ENCODE measurements at regions of chr1 and their contacts with region 1.

Region 1: GRCh38 chr1:234978397-234979295 is 150.0 kb downstream of the TOMM20 start:
- DNase-seq: peak; percentile 91 to 96 (median 93)
- H3K4me3 ChIP-seq: peak overlapping the region in 1 of 3 experiments; percentile 67
- H3K4me3 Mint-ChIP-seq: peak overlapping the region; percentile 86 to 96
- H3K27ac ChIP-seq: peak overlapping the region; percentile 99 to 100
- H3K27ac Mint-ChIP-seq: peak overlapping the region; percentile 100
- H3K4me1 ChIP-seq: peaks cover 100% of the 10 kb centered on the region in 2 donors
- H3K4me1 Mint-ChIP-seq: peaks cover 91% of the 10 kb centered on the region
- H3K27me3 ChIP-seq: no peaks in the 10 kb centered on the region
- H3K27me3 Mint-ChIP-seq: no peaks in the 10 kb centered on the region
- CTCF ChIP-seq: peak; percentile 28

Region 2: DNA sequence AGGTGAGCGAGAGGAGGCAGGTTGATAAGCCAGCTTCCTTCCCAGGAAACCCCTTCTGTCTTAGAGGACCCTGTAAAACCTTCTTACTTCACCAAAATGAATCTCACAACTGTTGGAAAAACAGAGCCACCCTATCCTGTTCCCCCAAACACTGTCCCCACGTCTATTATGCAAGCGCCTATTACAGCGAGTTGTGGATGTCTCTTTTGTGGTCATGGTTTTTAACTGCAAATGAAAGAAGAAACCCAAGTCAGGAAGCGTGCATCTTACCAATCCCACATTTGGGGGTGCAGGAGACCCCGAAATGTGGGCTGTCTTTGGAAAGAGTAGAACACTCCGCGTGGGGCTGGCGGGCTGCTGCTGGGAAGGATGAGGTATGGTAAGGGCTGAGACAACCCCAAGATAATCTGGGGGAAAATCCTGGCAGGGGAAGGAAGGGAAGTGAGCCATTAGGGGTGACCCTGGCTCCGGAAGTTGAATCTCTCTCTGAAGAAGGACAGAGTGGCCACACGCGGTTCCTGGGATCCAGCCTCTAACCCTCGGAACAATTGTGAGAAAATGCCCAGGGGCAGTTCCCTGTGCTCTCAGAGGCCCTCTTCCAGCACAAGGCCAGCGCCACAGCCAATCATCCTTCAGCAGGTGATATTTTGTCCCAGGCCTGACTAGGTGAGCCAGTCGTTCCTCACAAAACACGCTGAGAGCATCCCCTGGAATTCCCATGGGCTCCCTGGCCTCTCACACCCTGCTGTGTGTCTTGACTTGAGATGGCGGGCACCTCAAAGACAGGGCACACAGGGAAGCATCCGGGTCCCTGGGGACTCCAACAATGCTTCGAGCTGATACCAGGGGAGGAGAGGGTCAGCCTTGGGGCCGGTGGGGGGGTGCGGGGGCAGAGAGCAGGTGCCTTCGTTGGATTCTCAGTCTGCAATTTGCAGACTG is 200.2 kb before region 1 on chr1:
- intact Hi-C with region 1: loop called in 1 of 2 experiments (anchors 5 kb)
- DNase-seq: peak; percentile 71 to 88 (median 79)
- H3K4me3 ChIP-seq: peak overlapping the region; percentile 9 to 63 (median 10)
- H3K4me3 Mint-ChIP-seq: no peak overlapping the region
- H3K27ac ChIP-seq: peak overlapping the region; percentile 85 to 99
- H3K27ac Mint-ChIP-seq: no peak overlapping the region
- H3K4me1 ChIP-seq: peaks cover 62 to 63% of the 10 kb centered on the region in 2 donors
- H3K4me1 Mint-ChIP-seq: no peaks in the 10 kb centered on the region
- H3K27me3 ChIP-seq: no peaks in the 10 kb centered on the region
- H3K27me3 Mint-ChIP-seq: no peaks in the 10 kb centered on the region
- CTCF ChIP-seq: no peak

Region 3: GRCh38 chr1:234842726-234843641 is 135.7 kb before region 1 on chr1:
- intact Hi-C with region 1: loop called (anchors 2 to 5 kb)
- DNase-seq: peak in 2 of 3 donors; percentile 44 to 79
- H3K4me3 ChIP-seq: peak overlapping the region in 1 of 3 experiments; percentile 41
- H3K4me3 Mint-ChIP-seq: peak overlapping the region; percentile 64 to 65
- H3K27ac ChIP-seq: peak overlapping the region; percentile 98 to 100
- H3K27ac Mint-ChIP-seq: peak overlapping the region; percentile 97 to 99 (median 98)
- H3K4me1 ChIP-seq: peaks cover 78 to 91% of the 10 kb centered on the region in 2 donors
- H3K4me1 Mint-ChIP-seq: peaks cover 95% of the 10 kb centered on the region
- H3K27me3 ChIP-seq: no peaks in the 10 kb centered on the region
- H3K27me3 Mint-ChIP-seq: no peaks in the 10 kb centered on the region
- CTCF ChIP-seq: no peak

Region 4: DNA sequence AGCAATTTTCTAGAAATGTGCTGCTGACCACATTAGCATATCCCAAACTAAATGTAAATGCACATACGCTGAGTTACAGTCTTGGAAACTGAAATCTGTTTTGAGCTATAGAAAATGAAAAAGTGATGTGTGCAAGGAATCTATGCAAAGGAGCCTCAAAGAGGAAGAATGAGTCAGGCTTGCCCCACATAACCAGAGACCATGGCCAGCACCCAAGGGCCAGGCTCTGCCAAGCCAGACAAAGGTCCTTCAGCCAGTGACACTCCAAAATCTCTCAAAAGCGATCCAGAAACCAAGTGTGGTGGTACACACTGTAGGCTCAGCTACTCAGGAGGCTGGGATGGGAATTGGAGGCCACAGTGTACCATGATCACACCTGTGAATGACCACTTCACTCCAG is 45.2 kb before region 1 on chr1:
- intact Hi-C with region 1: loop called (anchors 1 to 10 kb)
- DNase-seq: peak; percentile 90 to 94 (median 92)
- H3K4me3 ChIP-seq: no peak overlapping the region
- H3K4me3 Mint-ChIP-seq: peak overlapping the region in 1 of 2 donors; percentile 55
- H3K27ac ChIP-seq: peak overlapping the region; percentile 95 to 98
- H3K27ac Mint-ChIP-seq: peak overlapping the region; percentile 97 to 99 (median 99)
- H3K4me1 ChIP-seq: peaks cover 57 to 85% of the 10 kb centered on the region in 2 donors
- H3K4me1 Mint-ChIP-seq: peaks cover 65% of the 10 kb centered on the region
- H3K27me3 ChIP-seq: no peaks in the 10 kb centered on the region
- H3K27me3 Mint-ChIP-seq: no peaks in the 10 kb centered on the region
- CTCF ChIP-seq: no peak

Region 5: GRCh38 chr1:234963180-234963903 is 15.3 kb before region 1 on chr1:
- intact Hi-C with region 1: loop called in 1 of 2 experiments (anchors 1 kb)
- DNase-seq: peak; percentile 98 to 100 (median 99)
- H3K4me3 ChIP-seq: peak overlapping the region in 1 of 3 experiments; percentile 19
- H3K4me3 Mint-ChIP-seq: peak overlapping the region; percentile 70 to 85
- H3K27ac ChIP-seq: peak overlapping the region; percentile 89 to 100
- H3K27ac Mint-ChIP-seq: peak overlapping the region; percentile 98 to 100 (median 100)
- H3K4me1 ChIP-seq: peaks cover 73 to 78% of the 10 kb centered on the region in 2 donors
- H3K4me1 Mint-ChIP-seq: peaks cover 74% of the 10 kb centered on the region
- H3K27me3 ChIP-seq: no peaks in the 10 kb centered on the region
- H3K27me3 Mint-ChIP-seq: peaks cover 0 to 2% (median 0%) of the 10 kb centered on the region in 3 donors
- CTCF ChIP-seq: no peak

Region 6: DNA sequence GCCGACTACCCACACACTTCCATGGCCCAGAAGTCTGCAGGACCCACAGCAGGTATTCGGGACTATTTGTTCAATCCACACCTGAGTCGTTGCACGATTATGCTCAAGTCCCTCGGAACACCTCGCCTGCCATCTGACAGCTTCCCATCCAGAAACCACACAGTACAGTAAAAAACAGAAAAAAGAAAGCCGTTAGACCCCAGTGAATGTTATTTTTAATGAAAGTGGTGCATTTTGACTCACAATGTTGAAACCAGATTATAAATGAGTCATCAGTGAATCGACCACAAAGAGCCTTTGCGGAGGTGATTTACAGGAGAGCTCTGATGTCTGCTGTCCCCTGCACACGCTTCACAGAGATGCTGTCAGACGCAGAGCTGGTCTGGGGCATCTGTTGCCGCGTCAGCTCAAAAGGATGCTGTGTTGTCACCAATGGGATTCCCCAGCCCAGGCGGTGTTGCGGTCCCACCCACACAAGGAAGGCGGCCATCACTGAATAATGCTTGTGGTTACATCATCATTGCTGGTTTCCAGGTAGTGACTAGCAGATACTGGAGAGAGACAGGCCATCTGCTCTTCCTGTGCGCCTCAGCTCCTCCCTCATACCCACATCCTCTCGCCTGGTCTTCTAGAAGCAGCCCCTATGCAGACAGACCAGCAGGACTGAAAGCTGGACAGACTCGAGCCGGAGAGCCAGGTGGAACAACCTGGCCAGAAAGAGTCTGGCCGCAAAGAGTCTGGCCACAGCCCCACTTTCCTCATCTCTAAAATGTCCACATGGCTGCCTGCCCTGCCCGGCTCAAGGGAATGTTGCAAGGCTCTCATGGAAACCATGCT is 33.2 kb after region 1 on chr1:
- intact Hi-C with region 1: loop called (anchors 2 to 5 kb)
- DNase-seq: peak; percentile 98 to 100 (median 99)
- H3K4me3 ChIP-seq: peak overlapping the region in 1 of 3 experiments; percentile 38
- H3K4me3 Mint-ChIP-seq: peak overlapping the region; percentile 62 to 81
- H3K27ac ChIP-seq: peak overlapping the region; percentile 76 to 88
- H3K27ac Mint-ChIP-seq: peak overlapping the region; percentile 94 to 98 (median 96)
- H3K4me1 ChIP-seq: peaks cover 28 to 32% of the 10 kb centered on the region in 2 donors
- H3K4me1 Mint-ChIP-seq: peaks cover 60% of the 10 kb centered on the region
- H3K27me3 ChIP-seq: no peaks in the 10 kb centered on the region
- H3K27me3 Mint-ChIP-seq: peaks cover 0 to 2% (median 0%) of the 10 kb centered on the region in 3 donors
- CTCF ChIP-seq: no peak

Region 7: DNA sequence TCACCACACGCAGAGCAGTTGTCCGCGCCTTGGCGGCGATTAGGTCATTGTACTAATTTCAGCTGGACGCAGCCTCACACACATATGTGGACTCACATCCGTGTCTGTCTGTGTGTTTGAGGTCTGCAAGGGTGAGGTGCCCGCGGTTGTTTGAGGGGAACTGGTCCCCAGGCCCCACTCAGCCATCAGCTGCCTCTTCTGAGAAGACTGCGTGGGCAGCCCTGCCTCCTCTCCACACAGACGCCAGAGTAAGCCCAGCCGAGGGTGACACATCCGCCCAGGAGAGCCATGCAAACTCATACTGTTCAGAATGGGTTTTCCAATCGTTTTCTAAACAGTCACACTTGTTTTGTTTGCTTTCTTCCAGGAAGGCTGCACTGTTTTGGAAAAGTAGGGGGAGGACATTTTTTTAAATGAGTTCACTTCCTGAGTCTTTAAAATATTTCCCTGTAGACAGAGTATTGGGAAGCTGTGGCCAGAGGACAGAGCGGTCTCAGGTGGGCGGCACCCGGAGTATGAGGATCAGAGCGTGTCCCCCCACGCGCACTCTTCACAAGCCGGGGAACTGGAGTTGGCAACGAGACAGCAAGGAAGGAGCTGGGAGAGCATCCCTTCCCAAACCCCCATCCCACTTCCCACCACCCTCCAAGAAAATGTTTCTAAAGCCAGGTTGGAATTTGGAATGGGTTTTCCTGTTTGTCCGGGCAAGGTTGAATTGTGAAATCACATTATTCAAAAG is 96.7 kb after region 1 on chr1:
- intact Hi-C with region 1: loop called in 1 of 2 experiments (anchors 2 kb)
- DNase-seq: peak; percentile 66 to 70 (median 67)
- H3K4me3 ChIP-seq: no peak overlapping the region
- H3K4me3 Mint-ChIP-seq: peak overlapping the region in 1 of 2 donors; percentile 48
- H3K27ac ChIP-seq: peak overlapping the region in 1 of 2 donors; percentile 80
- H3K27ac Mint-ChIP-seq: peak overlapping the region; percentile 73 to 95 (median 91)
- H3K4me1 ChIP-seq: peaks cover 64 to 77% of the 10 kb centered on the region in 2 donors
- H3K4me1 Mint-ChIP-seq: peaks cover 39% of the 10 kb centered on the region
- H3K27me3 ChIP-seq: no peaks in the 10 kb centered on the region
- H3K27me3 Mint-ChIP-seq: peaks cover 0 to 2% (median 0%) of the 10 kb centered on the region in 3 donors
- CTCF ChIP-seq: no peak

Measured in CD14-positive monocyte (primary cell).